Left lung (tissue), 14 donors: ENCODE measurements at regions of chr1 and their contacts with region 1.

Region 1: DNA sequence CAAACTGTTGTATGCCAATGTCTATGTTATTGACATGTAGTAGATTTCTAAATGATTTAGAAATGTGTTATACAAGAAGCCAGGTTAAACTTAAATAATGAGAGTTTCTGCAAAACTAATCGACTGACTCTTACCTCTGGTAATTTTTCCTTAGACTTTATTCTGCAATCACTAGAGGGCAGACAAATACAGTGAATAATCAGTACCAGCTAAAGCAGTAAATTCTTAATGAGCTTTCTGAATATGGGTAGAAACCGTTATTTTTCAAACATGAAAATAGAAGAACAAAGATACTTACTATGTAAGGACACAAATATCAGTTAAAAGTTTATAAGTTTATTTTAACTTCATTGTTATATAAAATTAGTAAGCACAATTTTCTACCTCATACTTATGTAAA is 97.9 kb upstream of the RGS1 start:
- DNase-seq: peak in 2 of 4 donors; percentile 24 to 44
- ATAC-seq: peak; percentile 86
- H3K4me3 ChIP-seq: no peak overlapping the region
- H3K27ac ChIP-seq: no peak overlapping the region
- H3K4me1 ChIP-seq: peaks cover 0 to 4% of the 10 kb centered on the region in 2 donors
- H3K27me3 ChIP-seq: no peaks in the 10 kb centered on the region
- CTCF ChIP-seq: peak in 1 of 2 donors; percentile 37

Region 2: DNA sequence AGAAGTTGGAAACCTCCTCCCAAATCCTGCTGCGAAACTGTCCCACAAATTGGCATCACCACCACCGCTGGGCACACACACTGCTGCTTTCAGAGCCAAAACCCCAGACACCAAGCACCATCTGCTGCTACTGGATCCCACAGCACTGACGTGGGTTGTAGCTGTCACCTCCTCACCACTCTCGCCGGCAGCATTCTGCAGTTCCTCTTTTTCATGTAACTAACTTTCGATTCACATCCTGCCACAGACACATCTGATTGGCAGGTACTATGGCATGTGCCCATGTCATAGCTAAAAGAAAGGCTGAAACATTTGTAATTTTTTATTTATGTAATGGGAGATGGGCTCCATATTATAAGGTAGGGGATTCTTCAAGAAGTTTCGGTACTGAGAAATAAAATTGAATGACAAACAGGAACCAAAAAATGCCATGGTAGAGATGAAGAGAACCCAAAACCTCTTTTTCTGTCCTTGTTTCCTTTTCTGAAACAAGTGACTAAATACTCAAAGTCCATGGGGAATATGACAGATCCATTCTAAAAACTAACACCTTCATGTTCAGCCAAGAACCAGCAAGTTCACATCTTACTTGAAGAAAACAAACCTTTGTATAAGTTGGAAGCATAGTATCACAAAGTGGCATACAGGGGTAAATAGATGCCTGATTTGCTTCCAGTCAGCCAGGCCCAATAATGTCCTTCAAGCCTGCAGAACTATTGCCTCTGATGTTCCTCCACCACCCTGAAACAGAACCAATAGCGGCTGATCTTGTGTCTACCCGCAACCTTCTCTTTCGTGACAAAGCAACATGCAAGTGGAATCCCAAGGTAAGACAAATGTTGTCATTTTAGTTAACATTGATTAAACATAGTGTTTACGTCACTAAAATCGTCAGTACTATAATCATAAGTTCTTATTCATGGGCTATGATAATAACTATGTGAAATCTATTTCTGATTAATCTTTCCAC is 131.8 kb after region 1 on chr1:
- intact Hi-C with region 1: loop called in 1 of 2 experiments (anchors 5 kb)
- DNase-seq: peak in 2 of 4 donors; percentile 73 to 83
- ATAC-seq: peak; percentile 87
- H3K4me3 ChIP-seq: no peak overlapping the region
- H3K27ac ChIP-seq: no peak overlapping the region
- H3K4me1 ChIP-seq: peaks cover 0 to 10% of the 10 kb centered on the region in 2 donors
- H3K27me3 ChIP-seq: no peaks in the 10 kb centered on the region
- CTCF ChIP-seq: no peak

Region 3: GRCh38 chr1:192808518-192809306 is 331.1 kb after region 1 on chr1 and contains the start of gene RGS2:
- intact Hi-C with region 1: loop called in 1 of 2 experiments (anchors 10 kb)
- DNase-seq: peak; percentile 93 to 97 (median 96)
- ATAC-seq: peak; percentile 95
- H3K4me3 ChIP-seq: peak within 1 kb of the TSS; percentile 61 to 62
- H3K27ac ChIP-seq: peak within 1 kb of the TSS; percentile 93 to 96
- H3K4me1 ChIP-seq: peaks cover 4 to 56% of the 10 kb centered on the region in 2 donors
- H3K27me3 ChIP-seq: no peaks in the 10 kb centered on the region
- CTCF ChIP-seq: peak in 1 of 2 donors; percentile 13
- polyA plus RNA-seq, gene RGS2: 88.3 to 182 (median 140) TPM

Region 4: DNA sequence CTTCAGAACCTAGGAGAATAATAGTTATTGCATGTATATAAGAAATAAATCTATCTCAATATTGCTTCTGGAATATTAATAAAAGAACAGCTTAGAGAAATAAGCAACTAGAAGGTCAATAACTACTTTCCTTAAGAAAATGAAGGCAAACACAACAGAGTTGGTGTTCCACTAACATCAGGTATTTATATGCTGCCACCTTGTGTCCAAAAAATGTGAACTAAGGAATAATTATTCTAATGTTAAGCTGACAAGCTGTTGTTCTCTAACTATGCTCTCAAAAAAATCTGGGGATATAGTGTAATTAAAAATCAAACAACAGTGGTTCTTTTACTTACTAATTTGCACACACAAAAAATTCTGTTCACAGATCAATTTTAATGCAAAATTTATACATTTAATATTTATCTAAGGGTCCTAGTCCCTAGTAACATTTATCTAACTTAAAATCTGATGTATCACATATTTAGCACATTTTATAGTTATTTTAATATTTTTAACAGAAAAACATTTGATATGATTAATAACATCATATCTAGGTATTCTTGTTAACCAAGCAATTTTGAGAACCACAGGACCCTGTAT is 541.9 kb after region 1 on chr1:
- intact Hi-C with region 1: loop called in 1 of 2 experiments (anchors 10 kb)
- DNase-seq: peak in 2 of 4 donors; percentile 53 to 72
- ATAC-seq: peak; percentile 75
- H3K4me3 ChIP-seq: no peak overlapping the region
- H3K27ac ChIP-seq: no peak overlapping the region
- H3K4me1 ChIP-seq: no peaks in the 10 kb centered on the region
- H3K27me3 ChIP-seq: no peaks in the 10 kb centered on the region
- CTCF ChIP-seq: peak in 1 of 2 donors; percentile 22